PC-3 (cell line): ENCODE measurements at regions of chr4 and their contacts with region 1.

Region 1: GRCh38 chr4:83639849-83640493 is 104.1 kb downstream of the GPAT3 start:
- DNase-seq: peak; percentile 84
- ATAC-seq: peak; percentile 71
- H3K4me3 ChIP-seq: no peak overlapping the region
- H3K27ac ChIP-seq: no peak overlapping the region
- H3K4me1 ChIP-seq: no peaks in the 10 kb centered on the region
- H3K27me3 ChIP-seq: no peaks in the 10 kb centered on the region
- CTCF ChIP-seq: peak; percentile 78

Region 2: DNA sequence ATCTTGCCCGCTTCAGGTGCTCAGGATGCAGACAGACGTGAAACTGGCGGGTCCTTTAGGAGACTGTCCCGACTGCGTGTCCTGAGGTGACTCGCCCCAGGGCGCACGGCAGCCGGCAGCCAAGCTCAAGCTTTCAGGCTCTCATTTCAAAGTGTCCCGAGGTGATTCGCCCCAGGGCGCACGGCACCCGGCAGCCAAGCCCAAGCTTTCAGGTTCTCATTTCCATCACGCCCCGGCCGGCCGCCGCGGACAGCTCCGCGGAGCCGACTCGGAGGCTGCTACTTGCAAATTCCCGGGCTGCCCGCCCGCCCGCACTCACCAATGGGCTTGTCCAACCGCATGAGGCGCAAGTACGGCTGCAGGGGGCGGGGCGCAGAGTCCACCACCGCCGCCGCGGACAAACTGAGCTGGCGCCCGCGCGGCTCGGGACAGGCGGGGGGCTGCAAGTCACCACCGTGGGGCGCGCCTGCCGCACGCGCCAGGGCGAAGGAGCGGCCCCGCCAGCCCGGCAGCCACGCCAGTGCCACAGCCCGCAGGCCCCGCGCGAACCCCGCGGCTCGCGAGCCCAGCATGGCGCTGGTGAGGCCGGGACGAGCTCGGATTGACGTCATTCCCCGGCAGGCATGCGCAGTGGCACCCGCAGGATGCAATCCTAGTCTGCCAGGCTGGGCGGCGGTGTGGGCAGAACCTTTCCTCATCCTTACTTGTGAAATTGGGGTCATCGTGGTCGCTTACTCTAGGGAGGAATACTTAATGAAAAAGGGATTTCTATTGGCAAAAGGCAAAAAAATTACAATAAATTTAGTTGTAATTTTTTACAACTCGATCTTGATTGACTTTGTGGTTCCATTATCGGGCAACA is 355.5 kb before region 1 on chr4 and contains the start of gene COQ2:
- CTCF ChIA-PET with region 1: no interaction called
- POLR2A ChIA-PET with region 1: no interaction called
- intact Hi-C with region 1: loop called (anchors 5 kb)
- DNase-seq: peak; percentile 87
- ATAC-seq: peak; percentile 86
- H3K4me3 ChIP-seq: peak within 1 kb of the TSS; percentile 91
- H3K27ac ChIP-seq: peak within 1 kb of the TSS; percentile 81
- H3K4me1 ChIP-seq: peaks cover 27% of the 10 kb centered on the region
- H3K27me3 ChIP-seq: no peaks in the 10 kb centered on the region
- CTCF ChIP-seq: 0 out of 2 replicates have a peak, but pooled peaks have one; percentile 15
- total RNA-seq, gene COQ2: 22.0 and 23.8 TPM in 2 replicates

Region 3: GRCh38 chr4:83490876-83491450 is 149.0 kb before region 1 on chr4:
- CTCF ChIA-PET with region 1: no interaction called
- POLR2A ChIA-PET with region 1: no interaction called
- intact Hi-C with region 1: loop called (anchors 1 kb)
- DNase-seq: peak; percentile 50
- ATAC-seq: no peak; the same call in 1 of the 2 replicates
- H3K4me3 ChIP-seq: no peak overlapping the region
- H3K27ac ChIP-seq: no peak overlapping the region
- H3K4me1 ChIP-seq: peaks cover 12% of the 10 kb centered on the region
- H3K27me3 ChIP-seq: no peaks in the 10 kb centered on the region
- CTCF ChIP-seq: peak; percentile 83

Region 4: DNA sequence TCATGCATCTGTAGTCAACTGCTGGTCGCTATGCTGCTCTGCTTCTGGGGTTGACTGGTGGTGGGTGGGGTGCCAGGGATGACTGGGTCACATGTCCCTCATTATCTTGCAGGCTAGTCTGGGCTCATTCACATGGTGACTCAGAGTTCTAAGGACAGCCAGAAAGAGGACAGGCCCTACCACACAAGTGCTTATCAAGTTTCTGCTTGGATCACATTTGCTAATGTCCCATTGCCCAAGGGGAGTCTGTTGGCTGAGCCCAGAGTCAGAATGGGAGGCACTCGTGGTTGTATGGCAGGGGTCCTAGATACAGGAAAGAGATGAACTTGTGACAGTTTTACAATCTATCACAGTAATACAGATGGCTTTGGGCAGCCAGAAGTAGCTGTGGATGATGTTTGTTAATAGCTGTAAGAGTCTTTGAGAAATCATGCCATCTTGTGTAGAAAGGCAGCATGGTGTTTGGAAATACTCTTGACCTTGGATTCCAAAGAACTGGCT is 117.2 kb after region 1 on chr4:
- CTCF ChIA-PET with region 1: no interaction called
- POLR2A ChIA-PET with region 1: no interaction called
- intact Hi-C with region 1: loop called (anchors 10 kb)
- DNase-seq: peak; percentile 3
- ATAC-seq: no peak
- H3K4me3 ChIP-seq: no peak overlapping the region
- H3K27ac ChIP-seq: no peak overlapping the region
- H3K4me1 ChIP-seq: no peaks in the 10 kb centered on the region
- H3K27me3 ChIP-seq: no peaks in the 10 kb centered on the region
- CTCF ChIP-seq: no peak

Region 5: GRCh38 chr4:83905952-83906351 is 266.0 kb after region 1 on chr4:
- CTCF ChIA-PET with region 1: no interaction called
- POLR2A ChIA-PET with region 1: no interaction called
- intact Hi-C with region 1: loop called (anchors 10 kb)
- DNase-seq: peak; percentile 33
- ATAC-seq: peak; percentile 50; the same call in 1 of the 2 replicates
- H3K4me3 ChIP-seq: no peak overlapping the region
- H3K27ac ChIP-seq: no peak overlapping the region
- H3K4me1 ChIP-seq: no peaks in the 10 kb centered on the region
- H3K27me3 ChIP-seq: no peaks in the 10 kb centered on the region; the same call in 1 of the 2 replicates
- CTCF ChIP-seq: peak; percentile 63; the same call in 1 of the 2 replicates